ENCODE measurements at regions of chr9 and their contacts with region 1.

Region 1: GRCh38 chr9:131762356-131762932 is 22.6 kb upstream of the RAPGEF1 start:
- DNase-seq: peak; percentile 34 to 94 (median 82)
- ATAC-seq: peak; percentile 94 to 99 (median 97)
- H3K4me3 ChIP-seq: no peak overlapping the region
- H3K27ac ChIP-seq: no peak overlapping the region
- H3K4me1 ChIP-seq: no peaks in the 10 kb centered on the region
- H3K27me3 ChIP-seq: no peaks in the 10 kb centered on the region
- CTCF ChIP-seq: peak; percentile 85 to 95 (median 94)

Region 2: DNA sequence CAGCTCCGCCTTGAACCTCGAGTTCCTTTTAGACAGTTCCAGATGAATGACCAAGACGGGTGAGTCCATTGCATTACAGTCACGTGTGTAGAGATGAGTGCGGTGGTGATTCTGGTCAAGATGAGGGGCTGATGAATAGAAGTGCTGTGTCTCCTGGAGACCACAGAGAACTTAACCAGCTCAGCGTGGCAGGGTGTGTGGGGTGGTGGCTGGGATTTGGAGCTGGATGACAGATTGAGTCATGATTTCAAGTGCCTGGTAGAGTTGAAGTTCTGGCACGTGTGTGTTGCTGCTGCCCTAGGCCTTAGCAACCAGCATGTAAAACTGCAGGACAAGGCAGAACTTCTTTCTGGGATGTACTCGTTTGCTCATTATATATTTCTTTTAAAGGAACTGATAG is 315.3 kb before region 1 on chr9:
- intact Hi-C with region 1: no loop called
- DNase-seq: peak in 2 of 6 donors; percentile 5 to 23
- ATAC-seq: peak in 3 of 4 donors; percentile 42 to 71 (median 54)
- H3K4me3 ChIP-seq: no peak overlapping the region
- H3K27ac ChIP-seq: peak overlapping the region in 1 of 4 donors; percentile 22
- H3K4me1 ChIP-seq: peaks cover 6 to 18% (median 6%) of the 10 kb centered on the region in 3 donors
- H3K27me3 ChIP-seq: no peaks in the 10 kb centered on the region
- CTCF ChIP-seq: no peak

Region 3: DNA sequence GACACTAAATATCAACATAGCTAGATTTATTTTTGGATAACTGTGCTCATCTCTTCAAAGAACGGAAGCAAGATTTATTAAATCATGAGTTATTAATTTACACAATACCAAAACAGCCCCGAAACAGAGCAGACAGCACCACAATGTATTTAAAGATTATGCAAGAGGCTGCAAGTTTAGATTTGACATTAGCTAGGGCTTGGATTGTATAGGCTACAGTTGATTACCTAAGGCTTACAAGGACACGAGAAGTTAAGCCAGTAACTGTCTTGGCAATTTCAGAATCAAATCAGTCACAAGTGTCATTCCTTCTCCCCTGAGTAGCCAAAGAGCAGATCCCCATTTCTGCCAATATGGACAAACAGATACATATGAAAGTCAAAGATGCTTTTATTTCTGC is 164.6 kb after region 1 on chr9:
- intact Hi-C with region 1: no loop called
- DNase-seq: no peak
- ATAC-seq: no peak
- H3K4me3 ChIP-seq: no peak overlapping the region
- H3K27ac ChIP-seq: no peak overlapping the region
- H3K4me1 ChIP-seq: no peaks in the 10 kb centered on the region
- H3K27me3 ChIP-seq: no peaks in the 10 kb centered on the region
- CTCF ChIP-seq: no peak

Region 4: DNA sequence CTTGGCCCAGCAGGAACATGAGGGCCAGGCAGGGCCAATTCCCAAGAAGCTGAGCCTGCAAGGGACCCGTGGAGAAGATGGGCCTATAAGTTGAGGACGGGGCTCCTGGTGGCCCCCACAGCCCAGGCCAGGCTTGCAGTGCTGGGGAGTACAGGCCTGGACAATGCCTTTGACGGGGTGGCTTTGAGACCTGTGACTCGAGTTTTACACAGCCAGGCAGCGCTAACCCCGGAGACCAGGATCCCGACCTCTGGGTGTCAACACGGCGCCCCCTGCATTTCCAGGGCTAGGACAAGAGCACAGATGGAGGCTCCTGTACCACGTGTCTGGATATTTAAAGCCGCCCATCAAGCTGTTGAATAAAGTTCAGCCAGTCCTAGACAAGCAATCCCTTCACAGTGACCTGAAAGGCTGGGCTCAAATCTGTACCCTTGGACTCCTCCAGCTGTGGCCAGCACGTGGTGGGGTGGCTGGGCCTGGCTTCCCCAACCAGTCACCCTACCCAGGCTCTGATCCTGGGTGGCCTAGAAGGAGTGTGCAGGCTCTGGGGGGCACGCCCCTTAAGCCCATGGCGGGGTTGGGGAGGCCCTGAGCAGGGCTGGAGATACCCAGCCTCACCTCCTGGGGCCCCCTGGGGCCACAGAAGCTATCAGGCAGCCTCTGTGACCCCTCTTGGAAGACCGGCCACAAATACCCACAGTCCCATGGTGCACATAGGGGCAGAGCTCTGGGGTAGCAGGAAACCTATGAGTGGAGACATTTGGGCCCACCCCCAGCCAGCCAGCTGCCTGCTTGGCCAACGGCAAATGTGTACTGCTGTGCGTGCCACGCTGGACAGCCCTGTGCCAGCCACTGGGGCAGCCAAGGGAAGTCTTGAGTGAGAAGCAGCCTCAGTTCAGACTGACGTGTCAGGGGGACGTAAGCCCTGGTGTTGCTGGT is 488.1 kb after region 1 on chr9:
- intact Hi-C with region 1: loop called in 2 of 3 experiments (anchors 5 kb)
- DNase-seq: peak in 2 of 6 donors; percentile 55 to 69
- ATAC-seq: no peak
- H3K4me3 ChIP-seq: no peak overlapping the region
- H3K27ac ChIP-seq: no peak overlapping the region
- H3K4me1 ChIP-seq: peaks cover 4 to 5% (median 4%) of the 10 kb centered on the region in 3 donors
- H3K27me3 ChIP-seq: no peaks in the 10 kb centered on the region
- CTCF ChIP-seq: no peak

Region 5: GRCh38 chr9:132268725-132269352 is 506.4 kb after region 1 on chr9:
- intact Hi-C with region 1: loop called in 1 of 3 experiments (anchors 10 kb)
- DNase-seq: peak in 3 of 6 donors; percentile 60 to 82 (median 70)
- ATAC-seq: peak; percentile 81 to 86 (median 86)
- H3K4me3 ChIP-seq: no peak overlapping the region
- H3K27ac ChIP-seq: no peak overlapping the region
- H3K4me1 ChIP-seq: no peaks in the 10 kb centered on the region
- H3K27me3 ChIP-seq: no peaks in the 10 kb centered on the region
- CTCF ChIP-seq: peak; percentile 64 to 81 (median 76)

Measured in pancreas (tissue), 10 donors.